ENCODE measurements at regions of chr13 and their contacts with region 1.

Region 1: GRCh38 chr13:112873851-112874750 is 94.9 kb upstream of the MCF2L start:
- DNase-seq: peak; percentile 70 to 78 (median 73)
- ATAC-seq: peak; percentile 89 to 96 (median 94)
- H3K4me3 ChIP-seq: no peak overlapping the region
- H3K27ac ChIP-seq: peak overlapping the region in 1 of 3 donors; percentile 3
- H3K4me1 ChIP-seq: no peaks in the 10 kb centered on the region
- H3K27me3 ChIP-seq: no peaks in the 10 kb centered on the region
- CTCF ChIP-seq: peak; percentile 84 to 96 (median 88)
- POLR2A ChIP-seq: no peak

Region 2: DNA sequence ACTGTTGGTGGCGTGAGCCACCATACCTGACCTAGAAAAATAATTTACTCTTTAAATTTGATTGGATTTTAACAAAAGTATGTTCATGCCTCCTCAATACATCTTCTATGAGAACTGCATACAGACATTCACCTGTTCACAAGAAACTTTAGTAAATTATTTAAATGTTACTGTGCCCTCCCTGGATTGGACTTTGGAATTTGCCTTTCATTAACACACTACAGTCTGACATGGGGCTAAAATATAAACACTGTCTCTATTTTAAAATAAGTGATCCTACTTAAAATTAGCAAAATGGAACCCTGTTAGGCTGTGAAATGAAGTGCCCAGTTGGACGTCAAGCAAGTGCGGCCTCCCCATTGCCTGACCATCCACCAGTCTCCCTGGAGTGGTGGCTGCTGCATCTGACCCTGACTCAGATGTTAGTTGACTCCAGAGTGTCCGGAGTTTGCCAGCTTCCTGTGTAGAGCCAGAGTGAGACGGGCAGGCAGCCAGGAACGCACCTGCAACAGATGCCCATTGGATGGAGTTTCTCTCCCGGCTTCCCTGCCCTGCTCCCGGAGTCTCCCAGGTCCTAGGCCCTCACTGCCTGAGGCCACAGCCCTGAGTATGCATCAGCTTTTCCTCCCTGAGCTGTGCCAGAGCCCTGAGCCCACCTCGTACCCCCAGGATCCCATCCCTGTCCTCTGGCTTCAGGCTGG is 230.2 kb before region 1 on chr13:
- intact Hi-C with region 1: loop called (anchors 10 kb)
- DNase-seq: peak; percentile 73 to 78 (median 74)
- ATAC-seq: peak; percentile 59 to 88 (median 80)
- H3K4me3 ChIP-seq: no peak overlapping the region
- H3K27ac ChIP-seq: no peak overlapping the region
- H3K4me1 ChIP-seq: peaks cover 0 to 8% (median 4%) of the 10 kb centered on the region in 4 donors
- H3K27me3 ChIP-seq: no peaks in the 10 kb centered on the region
- CTCF ChIP-seq: no peak
- POLR2A ChIP-seq: no peak

Region 3: DNA sequence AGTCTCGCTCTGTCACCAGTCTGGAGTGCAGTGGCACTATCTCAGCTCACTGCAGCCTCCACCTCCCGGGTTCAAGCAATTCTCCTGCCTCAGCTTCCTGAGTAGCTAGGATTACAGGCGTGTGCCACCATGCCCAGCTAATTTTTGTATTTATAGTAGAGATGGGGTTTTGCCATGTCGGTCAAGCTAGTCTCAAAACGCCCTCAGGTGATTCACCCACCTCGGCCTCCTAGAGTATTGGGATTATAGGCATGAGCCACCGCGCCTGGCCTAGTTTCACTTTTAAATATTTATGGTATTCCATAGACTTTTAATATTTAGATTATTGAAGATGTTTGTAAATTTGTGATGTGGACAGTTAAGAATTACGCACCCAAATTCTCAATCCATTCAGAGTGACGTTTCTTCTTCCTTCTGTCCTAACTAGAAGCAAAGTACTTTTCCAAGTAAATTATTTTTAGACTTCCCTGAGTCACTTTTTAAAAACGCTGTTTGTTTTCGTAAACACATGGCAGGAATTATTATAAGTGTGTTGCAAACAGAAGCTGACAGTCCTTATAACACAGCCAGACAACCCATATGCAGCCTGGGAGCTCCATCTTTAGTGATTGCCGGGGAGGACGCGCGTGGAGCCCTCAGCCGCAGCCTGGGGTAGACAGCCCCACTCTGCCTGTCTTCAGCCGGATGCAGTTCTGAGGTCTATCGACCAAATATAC is 52.6 kb before region 1 on chr13:
- intact Hi-C with region 1: no loop called
- DNase-seq: no peak
- ATAC-seq: no peak
- H3K4me3 ChIP-seq: no peak overlapping the region
- H3K27ac ChIP-seq: no peak overlapping the region
- H3K4me1 ChIP-seq: no peaks in the 10 kb centered on the region
- H3K27me3 ChIP-seq: no peaks in the 10 kb centered on the region
- CTCF ChIP-seq: no peak
- POLR2A ChIP-seq: no peak